ENCODE measurements at regions of chr9 and their contacts with region 1.

Region 1: GRCh38 chr9:121321016-121321503 is 49.0 kb downstream of the STOM start:
- DNase-seq: no peak
- ATAC-seq: no peak
- H3K4me3 ChIP-seq: no peak overlapping the region
- H3K4me3 Mint-ChIP-seq: no peak overlapping the region
- H3K27ac ChIP-seq: no peak overlapping the region
- H3K27ac Mint-ChIP-seq: no peak overlapping the region
- H3K4me1 ChIP-seq: no peaks in the 10 kb centered on the region
- H3K4me1 Mint-ChIP-seq: no peaks in the 10 kb centered on the region
- H3K27me3 ChIP-seq: no peaks in the 10 kb centered on the region
- H3K27me3 Mint-ChIP-seq: no peaks in the 10 kb centered on the region
- CTCF ChIP-seq: no peak

Region 2: DNA sequence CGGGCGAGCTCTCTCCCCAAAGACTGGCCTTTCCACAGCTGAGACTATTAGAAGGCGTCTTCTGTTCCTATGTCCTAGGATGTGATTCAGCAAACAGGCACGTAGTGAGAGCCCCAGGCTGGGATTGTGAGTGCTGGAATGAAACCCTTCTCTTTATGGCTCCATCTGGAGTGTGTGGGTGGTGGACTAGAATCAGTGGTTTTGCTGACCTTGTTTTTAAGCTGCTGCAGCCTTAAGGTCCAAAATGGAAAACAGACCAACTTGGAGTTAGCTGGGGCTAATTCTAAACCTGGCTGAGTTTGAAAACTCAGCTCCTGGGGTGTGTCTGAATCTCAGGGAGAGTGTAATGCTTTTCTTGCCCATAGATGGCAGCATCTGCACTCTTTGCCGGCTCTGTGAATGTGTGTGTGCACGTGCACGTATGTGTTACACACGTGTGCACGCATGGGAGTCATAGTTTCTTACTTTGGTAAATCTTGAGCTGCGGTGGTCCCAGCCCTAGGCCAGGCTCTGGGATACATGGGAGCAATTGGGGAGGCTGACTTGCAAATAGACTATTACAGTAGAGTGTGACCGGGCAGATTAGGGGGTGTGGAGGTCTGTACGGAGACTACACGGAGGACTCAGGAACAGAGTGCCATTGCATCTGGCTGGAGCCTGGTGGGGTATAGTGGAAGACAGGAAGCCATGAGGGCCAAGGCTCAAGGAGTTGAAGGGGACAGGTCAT is 42.4 kb before region 1 on chr9:
- CTCF ChIA-PET with region 1: interaction called, 23 read pairs
- POLR2A ChIA-PET with region 1: no interaction called
- intact Hi-C with region 1: no loop called
- DNase-seq: peak; percentile 62
- ATAC-seq: peak; percentile 82
- H3K4me3 ChIP-seq: no peak overlapping the region
- H3K4me3 Mint-ChIP-seq: no peak overlapping the region
- H3K27ac ChIP-seq: no peak overlapping the region
- H3K27ac Mint-ChIP-seq: peak overlapping the region; percentile 22
- H3K4me1 ChIP-seq: peaks cover 3 to 20% of the 10 kb centered on the region in 2 donors
- H3K4me1 Mint-ChIP-seq: peaks cover 22% of the 10 kb centered on the region
- H3K27me3 ChIP-seq: no peaks in the 10 kb centered on the region
- H3K27me3 Mint-ChIP-seq: no peaks in the 10 kb centered on the region
- CTCF ChIP-seq: peak; percentile 73

Region 3: DNA sequence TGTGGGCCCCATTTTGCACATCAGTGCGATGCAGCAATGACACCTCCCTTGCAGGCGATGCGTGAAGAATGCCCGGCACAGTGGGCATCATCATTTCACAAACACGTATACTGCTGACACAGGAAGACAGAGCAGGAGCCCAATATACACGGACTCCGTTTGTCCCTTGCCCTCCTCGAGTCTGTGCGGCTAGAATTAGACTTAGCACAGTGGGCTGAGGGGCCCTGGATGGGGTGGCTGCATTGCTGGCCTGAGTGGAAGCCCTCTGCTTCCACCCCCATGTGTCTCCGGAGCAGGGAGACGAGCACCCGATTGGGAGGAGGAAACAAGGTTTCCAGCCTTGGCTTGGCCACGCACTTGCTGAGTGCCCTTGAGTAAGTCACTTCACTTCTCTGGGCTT is 12.3 kb before region 1 on chr9:
- CTCF ChIA-PET with region 1: interaction called, 25 read pairs
- POLR2A ChIA-PET with region 1: no interaction called
- intact Hi-C with region 1: no loop called
- DNase-seq: no peak
- ATAC-seq: no peak
- H3K4me3 ChIP-seq: no peak overlapping the region
- H3K4me3 Mint-ChIP-seq: no peak overlapping the region
- H3K27ac ChIP-seq: no peak overlapping the region
- H3K27ac Mint-ChIP-seq: no peak overlapping the region
- H3K4me1 ChIP-seq: no peaks in the 10 kb centered on the region
- H3K4me1 Mint-ChIP-seq: no peaks in the 10 kb centered on the region
- H3K27me3 ChIP-seq: no peaks in the 10 kb centered on the region
- H3K27me3 Mint-ChIP-seq: no peaks in the 10 kb centered on the region
- CTCF ChIP-seq: no peak

Region 4: DNA sequence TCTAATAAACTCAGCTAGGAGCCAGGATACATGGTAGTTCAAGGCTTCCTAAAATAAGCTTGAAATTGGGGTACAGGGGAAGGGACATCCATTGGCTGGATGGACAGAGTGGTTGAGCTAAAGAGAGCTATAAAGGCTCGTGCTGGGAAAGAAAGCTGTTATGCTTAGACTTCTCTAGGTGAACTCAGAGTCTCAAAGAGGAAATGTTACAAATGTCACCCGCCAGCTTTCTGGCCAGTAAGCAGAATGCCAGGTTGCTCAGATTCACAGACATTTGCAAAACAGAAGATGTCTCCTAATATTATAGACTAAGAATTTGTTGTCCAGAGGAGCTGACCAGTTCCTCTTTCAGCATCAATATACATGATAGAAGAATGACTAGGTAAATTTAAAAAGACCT is 18.4 kb after region 1 on chr9:
- CTCF ChIA-PET with region 1: interaction called, 14 read pairs
- POLR2A ChIA-PET with region 1: no interaction called
- intact Hi-C with region 1: no loop called
- DNase-seq: no peak
- ATAC-seq: no peak
- H3K4me3 ChIP-seq: no peak overlapping the region
- H3K4me3 Mint-ChIP-seq: no peak overlapping the region
- H3K27ac ChIP-seq: no peak overlapping the region
- H3K27ac Mint-ChIP-seq: no peak overlapping the region
- H3K4me1 ChIP-seq: peaks cover 3 to 9% of the 10 kb centered on the region in 2 donors
- H3K4me1 Mint-ChIP-seq: peaks cover 9% of the 10 kb centered on the region
- H3K27me3 ChIP-seq: no peaks in the 10 kb centered on the region
- H3K27me3 Mint-ChIP-seq: no peaks in the 10 kb centered on the region
- CTCF ChIP-seq: no peak

Region 5: GRCh38 chr9:121376214-121376830 is 55.3 kb after region 1 on chr9:
- CTCF ChIA-PET with region 1: interaction called, 102 read pairs
- POLR2A ChIA-PET with region 1: no interaction called
- intact Hi-C with region 1: loop called (anchors 1 kb)
- DNase-seq: peak; percentile 16
- ATAC-seq: no peak
- H3K4me3 ChIP-seq: no peak overlapping the region
- H3K4me3 Mint-ChIP-seq: no peak overlapping the region
- H3K27ac ChIP-seq: no peak overlapping the region
- H3K27ac Mint-ChIP-seq: no peak overlapping the region
- H3K4me1 ChIP-seq: no peaks in the 10 kb centered on the region
- H3K4me1 Mint-ChIP-seq: peaks cover 5% of the 10 kb centered on the region
- H3K27me3 ChIP-seq: no peaks in the 10 kb centered on the region
- H3K27me3 Mint-ChIP-seq: no peaks in the 10 kb centered on the region
- CTCF ChIP-seq: peak; percentile 42

Measured in B cell (primary cell).